Right ventricle myocardium inferior (tissue), 1 donor: ENCODE measurements at regions of chr3 and their contacts with region 1.

Region 1: DNA sequence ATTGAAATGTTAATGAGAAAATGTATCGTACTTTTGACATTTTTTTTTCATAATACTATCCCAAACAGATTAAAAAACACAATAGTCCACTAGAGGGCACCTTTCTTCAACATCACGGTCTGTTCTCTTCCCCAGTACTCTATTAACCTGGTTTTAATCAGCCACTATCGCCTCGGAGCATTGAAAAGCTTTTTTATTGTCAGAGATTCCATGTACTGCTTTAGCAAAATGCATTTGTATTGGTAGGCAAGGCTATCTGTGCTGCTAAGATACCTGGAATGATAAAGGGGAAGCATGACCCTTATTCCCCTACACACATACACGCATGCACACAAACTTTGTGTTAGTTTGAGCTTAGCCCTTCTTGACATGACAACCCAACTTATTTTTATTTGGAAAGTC is 160.1 kb upstream of the IL12A start:
- DNase-seq: no peak
- ATAC-seq: peak; percentile 79

Region 2: GRCh38 chr3:159672728-159673688 is 155.5 kb before region 1 on chr3:
- intact Hi-C with region 1: no loop called
- DNase-seq: no peak
- ATAC-seq: no peak

Region 3: DNA sequence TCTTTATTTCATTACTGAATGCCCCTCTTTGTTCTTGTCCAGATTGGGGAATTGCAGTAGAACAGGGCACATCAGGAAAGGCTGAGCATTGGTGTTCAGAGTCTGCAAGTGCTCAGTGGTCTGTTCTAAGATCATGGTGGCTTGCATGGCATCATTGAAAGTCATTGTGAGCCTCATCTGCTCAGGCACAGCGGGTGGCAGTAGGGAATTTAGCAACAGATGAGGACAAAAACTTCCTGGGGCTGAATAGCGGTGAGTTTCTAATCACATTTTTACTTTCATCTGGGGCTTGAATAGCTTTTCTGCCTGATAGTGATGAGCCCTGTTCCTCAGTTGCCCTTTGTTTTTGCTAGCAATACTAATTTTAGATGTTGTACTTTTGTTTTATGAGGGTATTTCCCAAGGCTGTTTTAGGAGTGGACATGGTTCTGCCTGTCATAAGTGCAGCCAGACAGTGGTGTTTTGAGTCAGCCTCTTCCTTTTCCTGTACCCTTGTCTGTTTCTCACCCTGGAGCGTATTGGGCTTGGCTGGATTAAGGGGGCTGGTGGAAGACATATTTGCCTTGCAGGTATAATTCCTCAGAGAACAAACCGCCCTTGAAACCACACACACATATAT is 32.9 kb after region 1 on chr3:
- intact Hi-C with region 1: loop called (anchors 5 kb)
- DNase-seq: no peak
- ATAC-seq: no peak

Region 4: DNA sequence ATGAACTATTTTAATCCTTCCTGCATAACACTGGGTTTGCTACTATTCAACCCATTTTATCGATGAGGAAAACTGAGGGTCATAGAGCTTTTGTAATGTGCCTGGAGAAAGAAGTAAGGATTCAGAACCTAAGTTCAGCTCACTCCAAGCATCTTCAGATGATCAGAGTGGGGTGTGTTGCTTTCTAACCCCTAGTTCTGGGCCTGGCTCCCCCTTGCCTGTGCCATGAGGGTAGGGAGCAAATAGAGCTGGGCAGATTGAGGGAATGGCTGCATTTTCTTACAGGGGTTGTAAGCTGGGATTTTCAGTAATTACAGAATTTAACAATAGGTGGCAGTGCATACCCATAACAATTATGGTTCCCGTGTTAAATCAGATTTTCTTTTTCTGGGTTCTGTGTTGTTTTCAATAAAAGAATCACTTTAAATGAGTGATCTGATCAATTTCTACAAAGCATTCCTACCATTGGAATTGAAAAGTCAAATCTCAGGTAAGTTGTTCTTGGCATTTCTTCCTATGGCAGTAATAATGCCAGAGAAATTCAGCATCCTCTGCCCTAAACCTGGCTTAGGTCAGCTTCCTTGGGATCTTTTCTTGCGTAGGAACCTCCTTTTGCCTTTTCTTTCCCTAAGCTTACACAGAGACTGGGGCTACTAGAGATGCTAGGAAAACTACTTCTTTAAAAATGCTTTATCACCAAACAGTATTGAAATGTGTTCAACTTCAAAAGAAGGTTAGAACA is 56.3 kb after region 1 on chr3:
- intact Hi-C with region 1: loop called (anchors 5 kb)
- DNase-seq: no peak
- ATAC-seq: no peak

Region 5: GRCh38 chr3:159941038-159941944 is 112.7 kb after region 1 on chr3:
- intact Hi-C with region 1: no loop called
- DNase-seq: no peak
- ATAC-seq: no peak

Region 6: GRCh38 chr3:159988617-159989271 is 160.2 kb after region 1 on chr3 and contains the start of gene IL12A:
- intact Hi-C with region 1: loop called (anchors 5 kb)
- DNase-seq: peak; percentile 89
- ATAC-seq: peak; percentile 97
- total RNA-seq, gene IL12A: 0.46 TPM